Activated T-helper 1 cell treated with anti-CD3 and anti-CD28 coated beads, Interleukin-12 subunit alpha, Interleukin-12 subunit beta, Interleukin-2, Interleukin-4 antibody, amounts not matched to agents 30 ng/mL and 10 ng/mL and 1 ng/mL, durations not matched to agents 14 hours and 24 hours and 36 hours (primary cell): ENCODE measurements at regions of chr2 and their contacts with region 1.

Region 1: GRCh38 chr2:46461011-46461674 is 18.2 kb upstream of the TMEM247 start:
- DNase-seq: peak; percentile 59
- H3K4me3 Mint-ChIP-seq: no peak overlapping the region
- H3K27ac Mint-ChIP-seq: no peak overlapping the region
- H3K4me1 Mint-ChIP-seq: peaks cover 9% of the 10 kb centered on the region
- H3K27me3 Mint-ChIP-seq: no peaks in the 10 kb centered on the region

Region 2: DNA sequence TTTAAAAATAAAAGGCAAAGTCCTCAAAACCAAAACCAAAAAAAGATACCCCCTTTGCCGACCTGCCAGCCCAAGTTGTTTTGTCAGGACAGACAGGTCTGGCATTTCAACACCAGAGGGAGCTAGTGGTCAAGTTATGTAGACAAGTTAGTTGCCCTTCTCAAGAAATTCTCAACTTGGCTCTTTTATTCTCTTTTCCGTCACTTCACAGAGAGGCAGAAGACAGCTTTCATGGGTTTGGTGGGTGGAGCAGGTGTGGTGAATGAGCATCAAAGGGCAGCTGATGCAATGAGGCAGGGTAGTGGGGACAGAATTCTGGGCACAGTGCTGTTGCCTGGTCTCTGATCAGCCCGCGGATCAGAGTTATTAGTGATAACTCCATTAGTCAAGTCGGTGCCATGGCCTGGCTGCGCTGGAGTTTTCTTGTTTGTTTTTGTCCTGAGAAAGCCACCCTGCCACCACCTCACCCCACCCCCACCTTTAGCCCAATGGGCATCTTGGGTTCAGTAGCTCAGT is 467.6 kb before region 1 on chr2:
- intact Hi-C with region 1: loop called (anchors 1 kb)
- DNase-seq: peak; percentile 44
- H3K4me3 Mint-ChIP-seq: no peak overlapping the region
- H3K27ac Mint-ChIP-seq: no peak overlapping the region
- H3K4me1 Mint-ChIP-seq: peaks cover 5% of the 10 kb centered on the region
- H3K27me3 Mint-ChIP-seq: peaks cover 3% of the 10 kb centered on the region

Region 3: GRCh38 chr2:46010925-46011490 is 450.1 kb before region 1 on chr2:
- intact Hi-C with region 1: loop called (anchors 1 kb)
- DNase-seq: no peak
- H3K4me3 Mint-ChIP-seq: no peak overlapping the region
- H3K27ac Mint-ChIP-seq: no peak overlapping the region
- H3K4me1 Mint-ChIP-seq: peaks cover 13% of the 10 kb centered on the region
- H3K27me3 Mint-ChIP-seq: no peaks in the 10 kb centered on the region

Region 4: GRCh38 chr2:46062637-46063412 is 398.3 kb before region 1 on chr2:
- intact Hi-C with region 1: loop called (anchors 1 kb)
- DNase-seq: peak; percentile 46
- H3K4me3 Mint-ChIP-seq: no peak overlapping the region
- H3K27ac Mint-ChIP-seq: no peak overlapping the region
- H3K4me1 Mint-ChIP-seq: peaks cover 18% of the 10 kb centered on the region
- H3K27me3 Mint-ChIP-seq: no peaks in the 10 kb centered on the region